Activated naive CD8-positive, alpha-beta T cell treated with anti-CD3 and anti-CD28 coated beads, Interleukin-2, amount 10 ng/mL, durations not matched to agents 7 days and 5 days (primary cell): ENCODE measurements at regions of chr12 and their contacts with region 1.

Region 1: GRCh38 chr12:9647825-9648700 is 21.4 kb upstream of the CLEC2D start:
- DNase-seq: peak; percentile 96
- ATAC-seq: peak; percentile 76
- H3K4me3 Mint-ChIP-seq: peak overlapping the region; percentile 97
- H3K27ac Mint-ChIP-seq: peak overlapping the region; percentile 99
- H3K4me1 Mint-ChIP-seq: peaks cover 60% of the 10 kb centered on the region
- H3K27me3 Mint-ChIP-seq: no peaks in the 10 kb centered on the region

Region 2: GRCh38 chr12:9615420-9616136 is 32.5 kb before region 1 on chr12:
- POLR2A ChIA-PET with region 1: interaction called, 18 read pairs
- DNase-seq: no peak
- ATAC-seq: peak; percentile 84
- H3K4me3 Mint-ChIP-seq: peak overlapping the region; percentile 71
- H3K27ac Mint-ChIP-seq: peak overlapping the region; percentile 88
- H3K4me1 Mint-ChIP-seq: peaks cover 35% of the 10 kb centered on the region
- H3K27me3 Mint-ChIP-seq: no peaks in the 10 kb centered on the region

Region 3: DNA sequence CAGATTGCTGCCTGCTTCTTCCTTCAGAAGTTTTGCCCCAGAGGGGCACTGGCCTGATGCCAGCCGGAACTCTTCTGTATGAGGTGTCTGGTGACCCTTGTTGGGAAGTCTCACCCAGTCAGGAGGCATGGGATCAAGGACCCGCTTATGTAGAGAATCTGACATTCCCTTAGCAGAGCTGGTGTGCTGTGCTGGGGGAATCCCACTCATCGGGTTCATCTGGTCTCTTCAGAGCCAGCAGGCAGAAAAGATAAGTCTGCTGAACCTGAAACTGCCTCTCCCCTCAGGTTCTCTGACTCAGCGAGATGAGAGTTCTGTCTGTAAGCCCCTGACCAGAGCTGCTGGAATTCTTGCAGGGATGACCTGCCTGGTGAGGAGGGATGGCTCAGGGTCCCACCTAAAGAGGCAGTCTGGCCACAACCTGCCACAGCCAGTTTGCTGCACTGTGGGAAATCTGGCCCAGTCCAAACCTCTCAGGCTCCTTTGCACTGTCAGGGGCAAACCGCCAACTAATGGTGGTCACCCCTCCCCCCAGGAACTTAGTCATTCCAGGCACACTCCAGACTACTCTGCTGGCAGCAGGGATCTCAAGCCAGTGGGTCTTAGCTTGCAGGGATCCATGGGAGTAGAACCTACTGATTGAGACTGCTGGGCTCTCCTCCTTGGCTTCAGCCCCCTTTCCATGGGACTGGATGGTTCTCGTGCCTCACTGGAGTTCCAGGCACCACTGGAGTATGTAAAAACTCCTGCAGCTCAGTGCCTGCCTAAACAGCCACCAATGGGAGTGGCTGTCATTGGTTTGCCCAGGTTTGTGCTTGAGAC is 25.6 kb after region 1 on chr12:
- POLR2A ChIA-PET with region 1: interaction called, 499 read pairs
- DNase-seq: peak; percentile 74
- ATAC-seq: peak; percentile 39
- H3K4me3 Mint-ChIP-seq: peak overlapping the region; percentile 95
- H3K27ac Mint-ChIP-seq: peak overlapping the region; percentile 99
- H3K4me1 Mint-ChIP-seq: peaks cover 62% of the 10 kb centered on the region
- H3K27me3 Mint-ChIP-seq: no peaks in the 10 kb centered on the region

Region 4: GRCh38 chr12:9702255-9702654 is 54.2 kb after region 1 on chr12:
- POLR2A ChIA-PET with region 1: interaction called, 20 read pairs
- DNase-seq: peak; percentile 69
- ATAC-seq: peak; percentile 75
- H3K4me3 Mint-ChIP-seq: peak overlapping the region; percentile 77
- H3K27ac Mint-ChIP-seq: peak overlapping the region; percentile 93
- H3K4me1 Mint-ChIP-seq: peaks cover 69% of the 10 kb centered on the region
- H3K27me3 Mint-ChIP-seq: no peaks in the 10 kb centered on the region

Region 5: GRCh38 chr12:9741726-9742125 is 93.7 kb after region 1 on chr12:
- POLR2A ChIA-PET with region 1: interaction called, 65 read pairs
- DNase-seq: peak; percentile 54
- ATAC-seq: peak; percentile 66
- H3K4me3 Mint-ChIP-seq: peak overlapping the region; percentile 94
- H3K27ac Mint-ChIP-seq: peak overlapping the region; percentile 99
- H3K4me1 Mint-ChIP-seq: peaks cover 59% of the 10 kb centered on the region
- H3K27me3 Mint-ChIP-seq: no peaks in the 10 kb centered on the region

Region 6: GRCh38 chr12:9760699-9761418 is 112.8 kb after region 1 on chr12 and contains the start of gene CD69:
- POLR2A ChIA-PET with region 1: interaction called, 107 read pairs
- DNase-seq: peak; percentile 67
- ATAC-seq: peak; percentile 55
- H3K4me3 Mint-ChIP-seq: peak within 1 kb of the TSS; percentile 93
- H3K27ac Mint-ChIP-seq: peak within 1 kb of the TSS; percentile 94
- H3K4me1 Mint-ChIP-seq: peaks cover 38% of the 10 kb centered on the region
- H3K27me3 Mint-ChIP-seq: no peaks in the 10 kb centered on the region
- total RNA-seq, gene CD69: 111 to 116 TPM